ENCODE measurements at regions of chr16 and their contacts with region 1.

Region 1: DNA sequence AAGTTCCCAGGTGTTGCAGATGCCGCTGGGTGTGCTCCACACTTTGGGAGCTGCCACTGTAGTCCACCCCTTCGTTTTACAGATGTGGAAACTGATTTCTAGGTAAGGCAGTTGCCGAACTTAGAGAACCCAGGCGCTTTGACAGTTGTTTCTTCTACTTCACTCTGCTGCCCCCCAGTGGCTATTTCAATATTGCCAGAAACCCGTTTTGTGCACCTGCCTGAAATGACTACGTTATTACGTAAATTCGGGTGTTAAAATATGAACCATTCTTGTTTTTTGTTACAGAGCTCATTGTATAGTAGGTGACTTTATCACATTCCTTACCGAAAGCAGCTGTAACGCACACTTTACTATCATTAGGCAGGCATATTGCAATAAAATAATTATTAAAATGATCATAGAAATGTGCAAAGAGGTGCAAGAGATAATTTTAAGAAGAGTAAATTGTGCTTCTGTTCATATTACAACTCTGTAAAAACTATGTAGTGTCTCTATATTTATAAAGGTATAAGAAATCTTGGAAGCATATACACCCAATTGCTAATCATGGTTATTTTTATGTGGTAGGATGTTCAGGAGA is 44.9 kb downstream of the OTOA start:
- DNase-seq: peak; percentile 74
- H3K4me3 ChIP-seq: no peak overlapping the region
- H3K27ac ChIP-seq: no peak overlapping the region
- H3K4me1 ChIP-seq: no peaks in the 10 kb centered on the region
- H3K27me3 ChIP-seq: no peaks in the 10 kb centered on the region
- CTCF ChIP-seq: peak; percentile 73
- POLR2A ChIP-seq: no peak

Region 2: DNA sequence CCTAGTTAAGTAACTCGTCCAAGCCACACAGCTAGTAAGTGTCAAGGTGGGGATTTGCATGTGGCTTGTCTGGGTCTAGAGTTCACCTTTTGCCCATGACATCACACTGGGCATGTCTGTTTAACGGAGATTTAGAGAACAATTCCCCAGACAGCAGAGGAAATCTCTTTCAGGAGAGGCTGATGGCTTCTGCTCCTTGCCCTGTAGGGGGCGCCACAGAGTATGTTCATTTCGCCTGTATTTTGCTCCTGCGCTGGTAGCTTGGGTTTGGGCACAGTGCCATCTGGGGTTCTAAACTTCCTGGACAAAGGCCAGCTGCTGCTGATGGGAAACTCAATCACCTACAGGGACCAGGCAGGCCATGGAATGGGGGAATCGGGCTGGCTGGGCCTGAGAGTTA is 24.4 kb before region 1 on chr16:
- CTCF ChIA-PET with region 1: interaction called, 10 read pairs
- POLR2A ChIA-PET with region 1: no interaction called
- dilution Hi-C with region 1: no loop called
- intact Hi-C with region 1: no loop called
- DNase-seq: no peak
- H3K4me3 ChIP-seq: no peak overlapping the region
- H3K27ac ChIP-seq: no peak overlapping the region
- H3K4me1 ChIP-seq: no peaks in the 10 kb centered on the region
- H3K27me3 ChIP-seq: peaks cover 0 to 2% of the 10 kb centered on the region in 2 experiments
- CTCF ChIP-seq: peak; percentile 32 to 40
- POLR2A ChIP-seq: no peak